ENCODE measurements at regions of chr11 and their contacts with region 1.

Region 1: GRCh38 chr11:47946682-47947575 is 33.4 kb upstream of the PTPRJ start:
- DNase-seq: peak; percentile 98
- ATAC-seq: peak; percentile 96
- H3K4me3 ChIP-seq: peak overlapping the region; percentile 44; the same call in 1 of the 2 replicates
- H3K27ac ChIP-seq: peak overlapping the region; percentile 97
- H3K4me1 ChIP-seq: peaks cover 38% of the 10 kb centered on the region
- H3K27me3 ChIP-seq: no peaks in the 10 kb centered on the region
- CTCF ChIP-seq: no peak

Region 2: DNA sequence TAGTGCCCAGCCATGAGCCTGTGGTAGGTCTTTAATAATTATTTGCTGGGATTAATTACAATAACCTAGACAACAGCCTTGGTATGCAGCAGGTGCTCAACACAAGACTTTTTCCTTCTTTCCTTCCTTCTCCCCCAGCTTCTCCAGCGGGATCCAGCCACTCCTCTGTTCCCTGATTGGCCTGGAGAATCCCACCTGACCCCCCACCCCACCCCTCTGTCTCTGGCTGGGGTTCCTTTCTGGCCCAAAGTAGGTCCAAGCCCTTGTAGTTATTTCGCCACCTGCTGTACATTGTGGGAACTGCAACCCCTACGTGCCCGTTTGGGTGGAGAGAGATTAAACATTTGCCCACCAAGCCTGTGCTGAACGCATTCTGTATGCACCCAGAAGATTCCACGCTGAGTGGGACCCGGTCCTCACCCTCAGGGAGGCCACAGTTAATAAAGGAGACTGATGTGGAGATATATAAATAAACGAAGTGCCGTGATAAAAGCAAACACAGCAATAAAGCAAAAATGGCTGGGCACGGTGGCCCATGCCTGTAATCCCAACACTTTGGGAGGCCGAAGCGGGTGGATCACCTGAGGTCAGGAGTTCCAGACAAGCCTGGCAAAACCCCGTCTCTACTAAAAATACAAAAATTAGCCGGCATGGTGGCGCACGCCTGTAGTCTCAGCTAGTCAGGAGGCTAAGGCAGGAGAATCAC is 1631.7 kb before region 1 on chr11:
- CTCF ChIA-PET with region 1: no interaction called
- POLR2A ChIA-PET with region 1: interaction called, 15 read pairs
- intact Hi-C with region 1: no loop called
- DNase-seq: peak; percentile 89
- ATAC-seq: peak; percentile 89
- H3K4me3 ChIP-seq: no peak overlapping the region
- H3K27ac ChIP-seq: no peak overlapping the region
- H3K4me1 ChIP-seq: no peaks in the 10 kb centered on the region
- H3K27me3 ChIP-seq: no peaks in the 10 kb centered on the region
- CTCF ChIP-seq: peak; percentile 91

Region 3: GRCh38 chr11:47980245-47981049 is 33.5 kb after region 1 on chr11 and contains the start of gene PTPRJ:
- CTCF ChIA-PET with region 1: no interaction called
- POLR2A ChIA-PET with region 1: no interaction called
- intact Hi-C with region 1: loop called (anchors 1 kb)
- DNase-seq: peak; percentile 49
- ATAC-seq: peak; percentile 49
- H3K4me3 ChIP-seq: peak within 1 kb of the TSS; percentile 86
- H3K27ac ChIP-seq: no peak within 1 kb of the TSS
- H3K4me1 ChIP-seq: peaks cover 26% of the 10 kb centered on the region
- H3K27me3 ChIP-seq: no peaks in the 10 kb centered on the region
- CTCF ChIP-seq: no peak
- total RNA-seq, gene PTPRJ: 10.5 and 12.8 TPM in 2 replicates